Psoas muscle (tissue), 8 donors: ENCODE measurements at regions of chr10 and their contacts with region 1.

Region 1: DNA sequence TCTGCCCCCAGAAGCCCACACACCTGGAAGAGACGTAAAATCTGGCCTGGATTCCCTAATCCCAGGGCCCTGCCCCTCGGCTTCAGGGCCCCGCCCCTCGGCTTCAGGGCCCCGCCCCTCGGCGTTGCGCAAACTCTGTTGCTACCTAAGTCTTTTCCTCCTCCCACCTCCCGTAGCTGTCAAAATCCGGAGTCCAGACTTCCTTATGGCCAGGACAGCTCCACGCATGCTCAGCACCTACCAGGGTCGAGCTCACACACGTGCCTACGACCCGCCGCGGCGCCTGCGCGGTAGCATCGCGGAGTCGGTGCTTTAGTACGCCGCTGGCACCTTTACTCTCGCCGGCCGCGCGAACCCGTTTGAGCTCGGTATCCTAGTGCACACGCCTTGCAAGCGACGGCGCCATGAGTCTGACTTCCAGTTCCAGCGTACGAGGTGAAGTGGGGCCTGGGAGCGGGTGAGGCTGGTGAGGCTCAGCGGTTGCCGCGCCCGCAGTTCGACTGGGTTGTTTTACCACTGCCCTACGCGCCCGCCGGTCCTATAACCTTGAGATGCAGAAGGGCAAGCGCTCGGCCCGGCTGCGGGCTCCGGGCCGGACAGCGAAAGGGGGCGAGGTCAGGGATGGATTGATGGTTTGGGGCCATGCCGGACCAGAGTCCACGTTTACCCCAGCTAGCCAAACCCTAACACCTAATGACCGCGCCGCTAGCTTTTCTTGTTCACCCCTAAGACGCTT is at the start of gene CISD1:
- DNase-seq: peak; percentile 95 to 99
- ATAC-seq: peak; percentile 87 to 91 (median 88)
- H3K4me3 ChIP-seq: peak within 1 kb of the TSS; percentile 90
- H3K27ac ChIP-seq: peak within 1 kb of the TSS; percentile 97
- H3K4me1 ChIP-seq: peaks cover 34% of the 10 kb centered on the region
- H3K27me3 ChIP-seq: no peaks in the 10 kb centered on the region
- CTCF ChIP-seq: no peak
- total RNA-seq, gene CISD1: 64.5 to 134 (median 112) TPM

Region 2: GRCh38 chr10:58220769-58221451 is 48.1 kb before region 1 on chr10:
- intact Hi-C with region 1: loop called in 1 of 2 experiments (anchors 5 kb)
- DNase-seq: no peak
- ATAC-seq: peak; percentile 84 to 96 (median 90)
- H3K4me3 ChIP-seq: no peak overlapping the region
- H3K27ac ChIP-seq: peak overlapping the region; percentile 64
- H3K4me1 ChIP-seq: peaks cover 27% of the 10 kb centered on the region
- H3K27me3 ChIP-seq: no peaks in the 10 kb centered on the region
- CTCF ChIP-seq: no peak

Region 3: DNA sequence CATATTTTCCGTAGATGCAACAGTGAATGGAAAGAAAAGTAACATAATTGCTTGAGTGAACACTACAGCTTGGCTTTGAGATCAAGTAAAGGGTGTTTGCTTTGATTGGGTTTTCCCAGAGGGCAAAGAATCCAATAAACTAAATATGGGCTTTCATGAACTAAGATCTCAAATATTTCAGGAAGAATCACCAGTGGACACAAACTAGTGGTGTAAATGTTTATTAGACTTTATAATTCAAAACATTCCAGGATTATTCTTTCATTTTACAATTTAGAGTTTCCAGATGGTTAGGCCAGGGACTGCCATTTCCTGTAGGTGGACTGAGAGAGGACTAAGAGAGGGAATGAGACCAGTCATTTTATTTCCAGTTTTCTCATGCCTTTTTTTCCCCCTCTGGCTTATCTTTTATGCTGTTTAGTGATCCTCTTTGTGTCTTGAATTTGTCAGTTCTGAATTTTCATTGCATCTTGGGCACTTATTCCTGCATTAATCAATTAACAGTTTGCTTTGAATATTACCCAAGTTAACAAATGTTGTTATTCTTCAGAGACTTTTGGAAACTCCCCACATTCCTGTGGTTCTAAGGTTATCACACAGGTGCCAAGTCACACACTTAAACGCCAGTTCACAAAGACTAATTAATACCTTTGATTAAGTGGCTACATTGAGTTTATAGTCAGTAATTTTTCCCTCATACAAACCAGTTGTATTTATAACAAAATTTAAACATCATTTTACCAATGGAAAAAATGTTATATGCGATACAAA is 12.1 kb after region 1 on chr10:
- intact Hi-C with region 1: loop called in 1 of 2 experiments (anchors 1 kb)
- DNase-seq: no peak
- ATAC-seq: no peak
- H3K4me3 ChIP-seq: no peak overlapping the region
- H3K27ac ChIP-seq: no peak overlapping the region
- H3K4me1 ChIP-seq: peaks cover 7% of the 10 kb centered on the region
- H3K27me3 ChIP-seq: no peaks in the 10 kb centered on the region
- CTCF ChIP-seq: no peak

Region 4: GRCh38 chr10:58334817-58335305 is 65.8 kb after region 1 on chr10 and contains the start of gene UBE2D1:
- intact Hi-C with region 1: no loop called
- DNase-seq: peak; percentile 89 to 95
- ATAC-seq: peak; percentile 89 to 93 (median 90)
- H3K4me3 ChIP-seq: peak within 1 kb of the TSS; percentile 92
- H3K27ac ChIP-seq: peak within 1 kb of the TSS; percentile 99
- H3K4me1 ChIP-seq: peaks cover 39% of the 10 kb centered on the region
- H3K27me3 ChIP-seq: no peaks in the 10 kb centered on the region
- CTCF ChIP-seq: peak; percentile 26
- total RNA-seq, gene UBE2D1: 36.6 to 115 (median 46.6) TPM